ENCODE measurements at regions of chr11 and their contacts with region 1.

Region 1: GRCh38 chr11:111601979-111602864 is at the start of gene SIK2:
- DNase-seq: peak; percentile 89
- H3K4me3 Mint-ChIP-seq: peak within 1 kb of the TSS; percentile 89
- H3K27ac Mint-ChIP-seq: peak within 1 kb of the TSS; percentile 76
- H3K4me1 Mint-ChIP-seq: peaks cover 25% of the 10 kb centered on the region
- H3K27me3 Mint-ChIP-seq: no peaks in the 10 kb centered on the region
- total RNA-seq, gene SIK2: 7.7 to 10.8 TPM

Region 2: DNA sequence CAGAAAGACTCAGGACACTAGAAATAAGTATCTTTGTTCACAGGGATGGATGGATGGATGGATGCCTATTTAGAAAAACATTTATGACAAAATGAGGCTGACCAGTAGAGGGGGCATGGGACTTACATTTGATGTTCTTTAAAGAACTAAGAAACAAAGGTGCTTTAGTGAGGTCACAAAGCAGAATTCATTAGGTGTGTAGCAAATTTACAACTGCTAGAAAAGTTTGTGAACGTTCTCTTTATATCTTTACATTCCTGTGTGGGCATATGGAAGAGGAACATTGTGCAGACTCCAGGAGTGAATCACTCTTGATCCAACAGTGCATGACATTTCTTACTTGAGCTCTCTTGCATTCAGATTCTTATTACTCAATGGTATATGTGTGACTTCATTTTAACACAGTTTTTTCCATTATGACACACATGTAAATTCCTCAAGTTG is 15.8 kb before region 1 on chr11:
- CTCF ChIA-PET with region 1: interaction called, 12 read pairs
- POLR2A ChIA-PET with region 1: no interaction called
- DNase-seq: peak; percentile 40
- H3K4me3 Mint-ChIP-seq: no peak overlapping the region
- H3K27ac Mint-ChIP-seq: no peak overlapping the region
- H3K4me1 Mint-ChIP-seq: no peaks in the 10 kb centered on the region
- H3K27me3 Mint-ChIP-seq: peaks cover 4% of the 10 kb centered on the region

Region 3: GRCh38 chr11:111766093-111766833 is 164.0 kb after region 1 on chr11 and contains the start of gene PPP2R1B:
- CTCF ChIA-PET with region 1: interaction called, 15 read pairs
- POLR2A ChIA-PET with region 1: interaction called, 10 read pairs
- DNase-seq: peak; percentile 73
- H3K4me3 Mint-ChIP-seq: peak within 1 kb of the TSS; percentile 100
- H3K27ac Mint-ChIP-seq: peak within 1 kb of the TSS; percentile 96
- H3K4me1 Mint-ChIP-seq: peaks cover 37% of the 10 kb centered on the region
- H3K27me3 Mint-ChIP-seq: no peaks in the 10 kb centered on the region
- total RNA-seq, gene PPP2R1B: 51.3 to 55.7 TPM